Naive thymus-derived CD8-positive, alpha-beta T cell (primary cell): ENCODE measurements at regions of chr22 and their contacts with region 1.

Region 1: DNA sequence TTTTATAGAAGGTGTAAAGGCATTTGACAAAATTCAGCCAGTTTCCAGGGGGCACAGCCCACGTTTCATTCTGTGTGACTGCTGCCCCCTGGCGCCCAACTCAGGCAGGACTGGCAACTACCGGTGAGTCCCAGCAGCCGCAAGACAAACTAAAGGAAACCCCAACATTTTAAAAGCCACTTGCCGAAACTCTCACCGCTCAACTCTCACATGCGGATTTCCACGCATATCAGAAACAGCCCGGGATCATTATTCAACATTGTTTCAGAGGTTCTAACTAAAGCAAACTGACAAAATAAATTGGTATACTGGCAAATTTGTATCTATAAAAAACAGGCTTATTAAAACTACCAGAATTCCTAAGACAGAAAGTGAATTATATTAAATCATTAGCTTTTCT is 48.2 kb downstream of the MORC2 start:
- DNase-seq: peak; percentile 69 to 92 (median 82)
- ATAC-seq: peak; percentile 74 to 80
- H3K4me3 Mint-ChIP-seq: peak overlapping the region; percentile 62 to 86 (median 83)
- H3K27ac Mint-ChIP-seq: peak overlapping the region in 9 of 10 donors; percentile 0 to 80 (median 36)
- H3K4me1 Mint-ChIP-seq: peaks cover 7 to 25% (median 15%) of the 10 kb centered on the region in 4 donors
- H3K27me3 Mint-ChIP-seq: peaks cover 0 to 2% (median 0%) of the 10 kb centered on the region in 5 donors

Region 2: GRCh38 chr22:30634471-30635233 is 285.8 kb before region 1 on chr22:
- POLR2A ChIA-PET with region 1: interaction called, 11 read pairs
- DNase-seq: peak; percentile 76 to 92 (median 88)
- ATAC-seq: peak; percentile 65 to 71
- H3K4me3 Mint-ChIP-seq: peak overlapping the region; percentile 71 to 89 (median 82)
- H3K27ac Mint-ChIP-seq: peak overlapping the region; percentile 61 to 95 (median 90)
- H3K4me1 Mint-ChIP-seq: peaks cover 10 to 27% (median 24%) of the 10 kb centered on the region in 4 donors
- H3K27me3 Mint-ChIP-seq: no peaks in the 10 kb centered on the region

Region 3: DNA sequence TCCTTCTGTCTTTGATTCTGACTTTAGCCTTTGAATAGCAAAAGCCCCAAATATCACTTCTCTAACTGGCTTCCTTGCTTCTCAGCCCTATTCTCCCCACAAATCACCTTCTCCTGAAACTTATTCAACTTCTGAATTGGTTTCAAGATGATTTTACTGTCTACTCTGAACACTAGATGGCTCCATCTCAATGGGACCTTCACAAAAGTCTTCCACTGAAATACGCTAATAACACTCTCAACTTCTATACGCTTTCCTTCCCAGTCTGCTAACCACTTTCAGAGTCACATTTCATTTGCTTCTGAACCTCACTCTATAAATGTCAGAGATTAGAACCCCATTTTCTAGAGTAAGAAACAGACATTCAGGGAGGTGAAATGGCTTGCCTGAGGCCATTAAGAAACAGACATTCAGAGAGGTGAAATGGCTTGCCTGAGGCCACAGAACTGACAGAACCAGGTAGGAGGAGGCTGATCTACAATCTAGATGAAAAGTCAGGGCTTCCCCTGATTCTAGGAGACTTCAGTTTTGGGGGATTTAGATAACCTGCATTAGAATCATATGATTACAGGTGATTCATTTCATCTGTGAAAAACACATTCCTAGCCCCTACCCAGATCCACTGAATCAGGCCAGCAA is 27.5 kb after region 1 on chr22:
- POLR2A ChIA-PET with region 1: interaction called, 82 read pairs
- DNase-seq: peak in 3 of 10 donors; percentile 49 to 64 (median 61)
- ATAC-seq: peak; percentile 41 to 47
- H3K4me3 Mint-ChIP-seq: no peak overlapping the region
- H3K27ac Mint-ChIP-seq: no peak overlapping the region
- H3K4me1 Mint-ChIP-seq: peaks cover 48 to 66% (median 60%) of the 10 kb centered on the region in 4 donors
- H3K27me3 Mint-ChIP-seq: no peaks in the 10 kb centered on the region

Region 4: DNA sequence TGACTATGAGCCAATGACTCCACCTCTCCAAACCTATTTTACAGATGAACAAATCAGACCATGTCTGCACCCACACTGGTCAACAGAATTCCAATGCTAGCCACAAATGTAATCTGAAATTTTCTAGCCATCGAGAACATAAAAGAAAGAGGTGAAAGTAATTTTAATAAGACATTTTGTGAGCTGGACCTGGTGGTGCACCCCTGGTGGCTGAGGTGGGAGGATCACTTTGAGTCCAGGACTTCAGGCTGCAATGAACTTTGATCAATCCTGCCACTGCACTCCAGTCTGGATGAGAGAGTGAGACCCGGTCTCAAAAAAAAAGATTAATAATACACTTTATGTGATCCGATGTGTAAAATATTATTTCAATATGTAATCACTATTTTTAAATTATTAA is 230.2 kb after region 1 on chr22:
- POLR2A ChIA-PET with region 1: no interaction called
- DNase-seq: no peak
- ATAC-seq: no peak
- H3K4me3 Mint-ChIP-seq: no peak overlapping the region
- H3K27ac Mint-ChIP-seq: no peak overlapping the region
- H3K4me1 Mint-ChIP-seq: peaks cover 0 to 4% (median 0%) of the 10 kb centered on the region in 4 donors
- H3K27me3 Mint-ChIP-seq: peaks cover 0 to 6% (median 4%) of the 10 kb centered on the region in 5 donors